SK-N-SH (cell line): ENCODE measurements at regions of chr2 and their contacts with region 1.

Region 1: DNA sequence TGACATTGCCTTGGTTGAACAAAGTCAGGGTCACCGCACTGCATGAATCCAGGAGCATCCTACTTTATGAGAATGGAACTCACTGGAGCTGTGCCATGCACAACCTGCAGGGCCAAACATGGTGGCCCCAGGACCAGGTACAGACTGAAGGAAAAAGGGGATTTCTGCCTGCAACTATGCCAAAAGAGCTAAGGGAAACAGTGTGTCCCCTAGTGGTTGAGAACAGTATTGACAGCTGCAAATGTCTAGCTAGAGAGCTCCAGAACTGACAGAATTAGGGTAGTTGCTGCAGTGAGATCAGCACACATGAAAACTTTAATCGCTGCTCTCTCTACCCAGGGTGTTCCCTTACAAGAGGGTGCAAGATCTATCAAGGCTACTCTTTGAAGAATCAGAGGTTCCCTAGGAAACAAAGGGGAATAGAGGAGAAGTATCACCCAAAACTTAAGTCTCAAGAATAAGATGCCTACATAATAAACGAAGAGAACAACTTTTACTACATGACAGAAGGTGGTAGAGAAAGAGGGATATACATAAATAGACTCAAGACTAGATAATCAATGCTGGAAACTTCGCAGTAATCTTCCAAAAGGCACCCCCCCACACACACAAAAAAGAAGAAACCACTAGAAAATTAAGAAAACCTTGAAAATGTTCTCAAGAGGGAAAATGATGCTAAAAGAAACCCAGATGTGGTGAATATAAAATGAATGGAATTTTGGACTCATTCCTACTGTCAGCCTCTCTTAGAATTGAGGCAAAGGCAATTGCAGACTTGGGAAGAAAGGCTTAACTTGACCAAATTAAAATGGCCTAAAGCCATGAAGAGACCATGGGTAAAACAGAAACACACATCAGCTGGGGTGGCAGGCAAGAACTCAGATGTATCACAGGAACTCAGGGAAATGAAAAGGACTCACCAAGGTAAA is 43.6 kb upstream of the IHH start:
- DNase-seq: peak; percentile 66
- H3K4me3 ChIP-seq: no peak overlapping the region; a peak in 1 of 4 replicates
- H3K27ac ChIP-seq: no peak overlapping the region
- H3K4me1 ChIP-seq: no peaks in the 10 kb centered on the region
- H3K27me3 ChIP-seq: no peaks in the 10 kb centered on the region
- CTCF ChIP-seq: peak; percentile 71
- EP300 ChIP-seq: no peak
- RAD21 ChIP-seq: peak; percentile 70

Region 2: GRCh38 chr2:218547978-218548377 is 556.4 kb before region 1 on chr2:
- CTCF ChIA-PET with region 1: no interaction called
- POLR2A ChIA-PET with region 1: no interaction called
- DNase-seq: no peak
- H3K4me3 ChIP-seq: no peak overlapping the region
- H3K27ac ChIP-seq: no peak overlapping the region
- H3K4me1 ChIP-seq: no peaks in the 10 kb centered on the region
- H3K27me3 ChIP-seq: no peaks in the 10 kb centered on the region
- CTCF ChIP-seq: no peak
- EP300 ChIP-seq: no peak
- RAD21 ChIP-seq: no peak

Region 3: DNA sequence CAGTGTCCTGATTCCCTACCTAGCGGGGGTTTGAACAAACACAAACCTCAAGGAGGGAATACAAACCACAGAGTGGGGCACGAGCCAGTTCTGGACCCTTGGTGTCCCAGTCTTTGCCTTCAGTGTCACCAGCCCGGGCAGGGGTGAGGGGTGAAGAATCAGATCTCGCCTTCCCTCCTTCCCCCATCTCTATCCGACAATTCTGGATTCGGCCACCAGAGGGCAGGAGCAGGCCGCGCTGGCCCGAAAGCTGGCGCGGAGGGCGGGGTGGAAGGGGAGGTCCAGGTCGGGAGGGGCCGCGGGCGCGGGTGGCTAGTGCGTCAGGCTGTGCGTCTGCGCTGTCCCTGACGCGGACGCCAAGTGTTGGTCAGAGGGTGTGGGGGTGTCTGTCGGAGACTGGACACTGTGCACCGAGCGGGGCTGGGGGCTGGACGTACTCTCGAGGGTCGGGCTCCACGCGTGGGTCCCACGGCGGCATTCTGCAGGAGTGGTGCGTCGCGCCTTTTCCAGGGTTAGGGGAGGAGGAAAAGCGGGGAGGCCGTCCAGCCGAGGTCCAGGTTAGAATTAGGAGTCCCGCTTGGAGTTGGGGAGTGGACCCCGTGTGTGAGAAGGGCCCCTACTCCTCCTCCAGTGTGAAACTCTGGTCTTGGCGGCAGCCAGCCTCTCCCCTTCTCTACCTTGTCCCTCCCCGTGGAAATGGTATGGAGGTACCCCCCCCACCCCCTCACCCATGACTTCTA is 108.2 kb before region 1 on chr2:
- CTCF ChIA-PET with region 1: interaction called, 10 read pairs
- POLR2A ChIA-PET with region 1: interaction called, 6 read pairs
- DNase-seq: peak; percentile 96
- H3K4me3 ChIP-seq: peak overlapping the region; percentile 57 to 61
- H3K27ac ChIP-seq: peak overlapping the region in 1 of 2 experiments; percentile 99; a peak in 2 of 4 replicates
- H3K4me1 ChIP-seq: peaks cover 0 to 61% of the 10 kb centered on the region in 2 experiments; a peak in 2 of 4 replicates
- H3K27me3 ChIP-seq: no peaks in the 10 kb centered on the region
- CTCF ChIP-seq: peak; percentile 85
- EP300 ChIP-seq: 0 out of 4 replicates have a peak, but pooled peaks of 1 of the 2 experiments have one; percentile 24
- RAD21 ChIP-seq: peak; percentile 96

Region 4: DNA sequence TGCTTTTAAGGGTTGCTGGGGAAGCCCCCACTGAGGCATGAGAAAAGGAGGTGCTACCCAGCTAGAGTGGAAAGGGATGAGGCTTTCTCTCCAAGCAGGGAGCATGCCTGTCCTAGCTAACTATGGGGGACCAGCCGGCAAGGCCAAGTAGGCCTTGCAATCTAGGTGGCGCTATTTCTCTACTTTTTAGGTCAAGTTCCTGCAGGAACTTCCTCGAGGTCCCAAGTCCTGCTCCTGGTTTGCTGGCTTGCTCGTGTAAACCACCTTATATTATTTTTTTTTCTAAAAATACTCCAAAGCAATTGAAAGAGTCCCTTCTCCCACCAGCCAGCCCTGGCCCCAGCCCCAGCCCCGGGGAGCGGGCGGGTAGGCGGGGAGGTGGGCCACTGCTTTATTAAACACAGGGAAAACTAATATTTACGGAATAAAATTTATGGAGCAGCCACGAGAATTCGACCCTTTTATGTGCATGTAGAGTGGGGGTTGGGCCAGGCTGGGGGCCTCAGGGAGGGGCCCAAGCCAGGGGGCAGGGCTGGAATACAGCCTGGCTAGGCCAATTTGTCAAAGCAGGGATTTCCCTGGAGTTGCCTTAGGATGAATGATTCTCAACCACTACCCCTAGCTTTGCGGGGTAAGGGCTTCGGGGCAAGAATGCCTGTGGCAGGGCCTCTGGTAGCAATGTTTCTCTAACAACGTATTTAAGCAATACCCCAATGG is 30.8 kb before region 1 on chr2:
- CTCF ChIA-PET with region 1: interaction called, 73 read pairs
- POLR2A ChIA-PET with region 1: no interaction called
- DNase-seq: peak; percentile 68
- H3K4me3 ChIP-seq: no peak overlapping the region
- H3K27ac ChIP-seq: no peak overlapping the region
- H3K4me1 ChIP-seq: no peaks in the 10 kb centered on the region
- H3K27me3 ChIP-seq: no peaks in the 10 kb centered on the region
- CTCF ChIP-seq: peak; percentile 63
- EP300 ChIP-seq: no peak
- RAD21 ChIP-seq: peak; percentile 59

Region 5: GRCh38 chr2:219079417-219079816 is 25.0 kb before region 1 on chr2:
- CTCF ChIA-PET with region 1: interaction called, 73 read pairs
- POLR2A ChIA-PET with region 1: no interaction called
- DNase-seq: no peak
- H3K4me3 ChIP-seq: no peak overlapping the region
- H3K27ac ChIP-seq: no peak overlapping the region
- H3K4me1 ChIP-seq: no peaks in the 10 kb centered on the region
- H3K27me3 ChIP-seq: no peaks in the 10 kb centered on the region
- CTCF ChIP-seq: no peak
- EP300 ChIP-seq: no peak
- RAD21 ChIP-seq: no peak

Region 6: GRCh38 chr2:219087361-219087760 is 17.0 kb before region 1 on chr2:
- CTCF ChIA-PET with region 1: interaction called, 17 read pairs
- POLR2A ChIA-PET with region 1: interaction called, 5 read pairs
- DNase-seq: no peak
- H3K4me3 ChIP-seq: no peak overlapping the region
- H3K27ac ChIP-seq: no peak overlapping the region
- H3K4me1 ChIP-seq: no peaks in the 10 kb centered on the region
- H3K27me3 ChIP-seq: no peaks in the 10 kb centered on the region
- CTCF ChIP-seq: no peak
- EP300 ChIP-seq: no peak
- RAD21 ChIP-seq: no peak

Region 7: GRCh38 chr2:219199470-219200211 is 95.3 kb after region 1 on chr2:
- CTCF ChIA-PET with region 1: no interaction called
- POLR2A ChIA-PET with region 1: no interaction called
- DNase-seq: no peak
- H3K4me3 ChIP-seq: no peak overlapping the region
- H3K27ac ChIP-seq: no peak overlapping the region
- H3K4me1 ChIP-seq: no peaks in the 10 kb centered on the region
- H3K27me3 ChIP-seq: peaks cover 8% of the 10 kb centered on the region; the same call in 1 of the 2 replicates
- CTCF ChIP-seq: no peak
- EP300 ChIP-seq: no peak
- RAD21 ChIP-seq: no peak